Calu3 (cell line): ENCODE measurements at regions of chr16 and their contacts with region 1.

Region 1: DNA sequence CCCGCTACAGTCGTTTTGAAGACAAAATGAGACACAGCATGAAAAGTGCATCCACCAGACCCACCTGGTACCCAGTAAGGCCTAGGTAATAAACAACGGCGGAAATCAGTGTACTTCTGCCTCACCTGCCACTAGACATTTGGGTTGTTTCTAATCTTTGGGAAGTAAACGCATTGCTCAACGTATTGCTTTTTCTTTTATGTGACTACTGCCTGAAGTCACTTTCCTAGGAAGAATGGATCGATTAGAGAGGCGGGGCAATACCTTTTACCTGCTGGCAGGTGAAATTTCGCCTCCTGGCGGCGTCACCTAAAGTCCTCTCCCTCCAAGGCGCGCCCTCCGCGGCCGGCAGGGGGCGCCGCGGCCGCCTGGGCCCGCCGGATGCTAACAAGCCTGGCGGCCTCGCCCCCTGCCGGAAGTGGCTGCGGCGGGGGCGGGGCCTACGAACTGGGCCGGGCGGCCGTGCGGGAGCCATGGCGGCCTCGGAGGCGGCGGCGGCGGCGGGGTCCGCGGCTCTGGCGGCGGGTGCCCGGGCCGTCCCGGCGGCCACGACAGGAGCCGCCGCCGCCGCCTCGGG is at the start of gene ATMIN:
- DNase-seq: peak; percentile 97
- H3K4me3 Mint-ChIP-seq: peak within 1 kb of the TSS; percentile 80
- H3K27ac Mint-ChIP-seq: peak within 1 kb of the TSS; percentile 60
- H3K4me1 Mint-ChIP-seq: peaks cover 38% of the 10 kb centered on the region
- H3K27me3 Mint-ChIP-seq: no peaks in the 10 kb centered on the region
- CTCF ChIP-seq: peak; percentile 100
- total RNA-seq, gene ATMIN: 61.3 and 64.3 TPM in 2 replicates

Region 2: DNA sequence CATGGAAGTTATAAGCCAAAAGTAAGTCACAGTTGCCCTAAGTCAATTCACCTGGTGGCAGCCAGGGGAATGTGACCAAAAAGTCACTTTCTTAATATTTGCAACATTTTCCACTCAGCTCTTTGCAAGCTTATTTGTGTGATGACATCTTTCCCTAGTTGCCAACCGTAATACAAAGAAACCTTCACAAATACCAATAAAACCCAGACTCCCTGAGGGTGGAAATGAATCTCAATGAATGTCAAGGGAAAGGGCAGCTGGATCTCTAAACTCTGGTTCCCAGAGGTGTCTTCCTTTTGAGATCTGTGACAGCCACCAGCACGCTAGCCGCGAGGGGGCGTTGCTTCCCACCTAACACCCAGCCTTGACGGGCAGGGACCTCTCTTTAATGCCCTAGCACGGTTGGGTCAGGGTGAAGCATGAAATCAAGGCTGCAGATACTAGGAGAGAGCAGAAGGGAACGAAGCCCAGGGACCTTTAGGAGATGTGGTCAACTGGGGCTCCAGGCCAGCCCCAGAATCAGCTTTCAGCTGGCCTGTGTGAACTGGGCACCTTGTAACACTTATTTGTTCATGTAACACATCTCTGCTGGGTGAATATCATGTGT is 111.0 kb before region 1 on chr16:
- CTCF ChIA-PET with region 1: interaction called, 4 read pairs
- intact Hi-C with region 1: loop called (anchors 2 kb)
- DNase-seq: peak; percentile 82
- H3K4me3 Mint-ChIP-seq: no peak overlapping the region
- H3K27ac Mint-ChIP-seq: no peak overlapping the region
- H3K4me1 Mint-ChIP-seq: no peaks in the 10 kb centered on the region
- H3K27me3 Mint-ChIP-seq: peaks cover 23% of the 10 kb centered on the region
- CTCF ChIP-seq: peak; percentile 58

Region 3: DNA sequence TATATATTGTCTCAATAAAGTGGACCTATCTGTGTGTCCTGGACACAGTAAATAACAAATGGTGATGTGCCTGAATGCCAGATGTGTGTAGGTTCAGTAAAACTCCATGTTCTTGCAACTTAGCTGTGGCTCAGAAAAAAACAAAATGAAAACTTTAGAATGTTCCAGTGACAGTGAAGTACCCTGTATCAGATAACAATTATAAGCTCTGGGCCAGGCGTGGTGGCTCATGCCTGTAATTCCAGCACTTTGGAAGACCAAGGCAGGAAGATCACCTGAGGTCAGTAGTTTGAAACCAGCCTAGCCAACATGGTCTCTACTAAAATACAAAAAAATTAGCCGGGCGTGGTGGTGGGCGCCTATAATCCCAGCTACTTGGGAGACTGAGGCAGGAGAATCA is 49.9 kb after region 1 on chr16:
- CTCF ChIA-PET with region 1: no interaction called
- intact Hi-C with region 1: no loop called
- DNase-seq: no peak
- H3K4me3 Mint-ChIP-seq: no peak overlapping the region
- H3K27ac Mint-ChIP-seq: no peak overlapping the region
- H3K4me1 Mint-ChIP-seq: peaks cover 8% of the 10 kb centered on the region
- H3K27me3 Mint-ChIP-seq: no peaks in the 10 kb centered on the region
- CTCF ChIP-seq: no peak

Region 4: DNA sequence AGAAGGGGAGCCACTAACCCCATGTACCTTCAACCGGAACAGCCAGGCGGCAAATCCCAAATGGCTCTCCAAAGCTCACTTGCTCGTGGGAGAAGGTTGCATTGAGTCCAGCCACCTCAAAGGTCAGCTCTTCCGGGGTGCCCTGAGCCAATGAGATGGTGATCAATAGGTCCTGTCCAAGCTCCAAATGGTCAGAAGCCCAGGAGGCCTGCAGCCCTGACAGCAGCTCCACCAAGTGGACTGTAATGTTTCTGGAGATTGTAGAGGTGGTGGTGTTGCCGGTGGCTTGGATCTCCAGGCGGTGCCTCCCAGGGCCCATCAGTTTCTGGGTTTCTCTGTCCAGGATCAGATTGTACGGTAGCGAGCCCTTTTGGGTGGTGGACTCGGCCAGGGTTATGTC is 163.1 kb after region 1 on chr16:
- CTCF ChIA-PET with region 1: interaction called, 7 read pairs
- intact Hi-C with region 1: loop called (anchors 10 kb)
- DNase-seq: peak; percentile 45
- H3K4me3 Mint-ChIP-seq: no peak overlapping the region
- H3K27ac Mint-ChIP-seq: no peak overlapping the region
- H3K4me1 Mint-ChIP-seq: no peaks in the 10 kb centered on the region
- H3K27me3 Mint-ChIP-seq: no peaks in the 10 kb centered on the region
- CTCF ChIP-seq: peak; percentile 19

Region 5: GRCh38 chr16:81737885-81738786 is 702.6 kb after region 1 on chr16:
- CTCF ChIA-PET with region 1: no interaction called
- intact Hi-C with region 1: loop called (anchors 10 kb)
- DNase-seq: peak; percentile 92
- H3K4me3 Mint-ChIP-seq: peak overlapping the region; percentile 53
- H3K27ac Mint-ChIP-seq: no peak overlapping the region
- H3K4me1 Mint-ChIP-seq: no peaks in the 10 kb centered on the region
- H3K27me3 Mint-ChIP-seq: peaks cover 9% of the 10 kb centered on the region
- CTCF ChIP-seq: peak; percentile 94